ENCODE measurements at regions of chr21 and their contacts with region 1.

Region 1: GRCh38 chr21:29208682-29209059 is 78.2 kb downstream of the MAP3K7CL start:
- DNase-seq: no peak
- ATAC-seq: peak; percentile 57
- H3K4me3 ChIP-seq: no peak overlapping the region
- H3K27ac ChIP-seq: peak overlapping the region; percentile 31; the same call in 1 of the 2 replicates
- H3K4me1 ChIP-seq: peaks cover 10% of the 10 kb centered on the region
- H3K27me3 ChIP-seq: no peaks in the 10 kb centered on the region
- CTCF ChIP-seq: no peak
- EP300 ChIP-seq: peak; percentile 38 to 40; a peak in 1 of 4 replicates
- POLR2A ChIP-seq: no peak
- RAD21 ChIP-seq: no peak

Region 2: DNA sequence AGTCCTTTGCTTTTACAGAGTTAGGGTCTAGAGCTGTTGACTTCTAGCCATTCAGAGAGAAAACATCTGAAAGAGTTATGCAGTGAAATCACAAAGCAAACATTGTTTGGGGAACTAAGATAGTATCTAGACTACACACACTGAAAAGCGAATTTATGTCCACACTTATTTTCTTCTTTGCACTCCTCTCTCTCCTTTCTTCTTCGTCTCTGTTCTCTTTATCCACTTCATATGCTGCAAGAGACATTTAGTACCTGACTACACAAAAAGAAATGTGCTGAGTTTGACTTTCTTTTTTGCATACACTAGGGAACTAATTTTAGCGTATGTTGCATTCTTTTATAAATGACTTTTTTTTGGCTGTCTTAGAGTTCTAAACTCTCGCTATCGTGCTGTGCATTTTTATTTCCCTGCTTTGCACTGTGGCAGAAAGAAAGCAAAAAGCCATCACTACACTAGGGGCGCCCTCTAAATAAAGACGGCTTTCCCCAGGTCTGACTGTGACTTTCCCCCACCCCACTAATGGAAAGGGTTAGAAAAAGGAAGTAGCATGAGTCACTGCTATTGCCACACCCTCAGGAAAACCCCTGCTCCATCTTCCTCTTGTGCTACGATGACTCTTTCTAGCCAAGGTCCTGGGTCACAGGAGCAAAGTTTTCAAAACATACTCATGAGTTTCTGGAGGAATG is 12.5 kb before region 1 on chr21:
- CTCF ChIA-PET with region 1: interaction called, 8 read pairs
- POLR2A ChIA-PET with region 1: interaction called, 10 read pairs
- RAD21 ChIA-PET with region 1: interaction called, 11 read pairs
- SMC1A ChIA-PET with region 1: interaction called, 25 read pairs
- in situ Hi-C with region 1: no loop called
- intact Hi-C with region 1: no loop called
- DNase-seq: peak; percentile 90
- ATAC-seq: peak; percentile 99
- H3K4me3 ChIP-seq: peak overlapping the region; percentile 51; the same call in 1 of the 2 replicates
- H3K27ac ChIP-seq: peak overlapping the region; percentile 80
- H3K4me1 ChIP-seq: peaks cover 13% of the 10 kb centered on the region
- H3K27me3 ChIP-seq: no peaks in the 10 kb centered on the region
- CTCF ChIP-seq: peak; percentile 49 to 67 (median 62)
- EP300 ChIP-seq: peak; percentile 61 to 74; a peak in 2 of 4 replicates
- POLR2A ChIP-seq: 0 out of 2 replicates have a peak, but pooled peaks have one; percentile 37
- RAD21 ChIP-seq: peak; percentile 55

Region 3: GRCh38 chr21:29221253-29221744 is 12.6 kb after region 1 on chr21:
- CTCF ChIA-PET with region 1: interaction called, 5 read pairs
- POLR2A ChIA-PET with region 1: interaction called, 3 read pairs
- RAD21 ChIA-PET with region 1: interaction called, 4 read pairs
- SMC1A ChIA-PET with region 1: interaction called, 24 read pairs
- in situ Hi-C with region 1: no loop called
- intact Hi-C with region 1: no loop called
- DNase-seq: no peak
- ATAC-seq: no peak
- H3K4me3 ChIP-seq: no peak overlapping the region
- H3K27ac ChIP-seq: no peak overlapping the region
- H3K4me1 ChIP-seq: peaks cover 5% of the 10 kb centered on the region
- H3K27me3 ChIP-seq: no peaks in the 10 kb centered on the region
- CTCF ChIP-seq: no peak
- EP300 ChIP-seq: no peak
- POLR2A ChIP-seq: no peak
- RAD21 ChIP-seq: no peak

Region 4: DNA sequence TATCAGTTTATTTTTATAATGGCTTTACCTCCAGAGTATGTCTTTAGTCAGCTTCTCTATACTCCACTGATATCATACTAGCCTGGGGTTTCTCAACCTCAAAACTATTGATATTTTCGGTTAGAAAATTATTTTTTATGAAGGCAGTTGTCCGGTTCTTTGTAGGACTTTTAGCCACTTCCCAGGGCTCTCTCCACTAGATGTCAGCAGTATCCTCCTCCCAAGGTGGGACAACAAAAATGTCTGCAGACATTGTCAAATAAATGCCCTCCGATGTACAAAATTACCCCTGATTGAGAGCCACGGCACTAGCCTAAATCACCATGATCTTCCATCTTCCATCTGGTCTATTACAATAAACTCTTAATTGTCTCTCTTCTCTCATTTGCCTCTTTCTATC is 735.2 kb after region 1 on chr21:
- CTCF ChIA-PET with region 1: no interaction called
- POLR2A ChIA-PET with region 1: no interaction called
- RAD21 ChIA-PET with region 1: no interaction called
- SMC1A ChIA-PET with region 1: no interaction called
- in situ Hi-C with region 1: no loop called
- intact Hi-C with region 1: no loop called
- DNase-seq: no peak
- ATAC-seq: no peak
- H3K4me3 ChIP-seq: no peak overlapping the region
- H3K27ac ChIP-seq: no peak overlapping the region
- H3K4me1 ChIP-seq: no peaks in the 10 kb centered on the region
- H3K27me3 ChIP-seq: no peaks in the 10 kb centered on the region; a peak in 1 of 4 replicates
- CTCF ChIP-seq: no peak
- EP300 ChIP-seq: no peak
- POLR2A ChIP-seq: no peak
- RAD21 ChIP-seq: no peak